ENCODE measurements at regions of chr13 and their contacts with region 1.

Region 1: DNA sequence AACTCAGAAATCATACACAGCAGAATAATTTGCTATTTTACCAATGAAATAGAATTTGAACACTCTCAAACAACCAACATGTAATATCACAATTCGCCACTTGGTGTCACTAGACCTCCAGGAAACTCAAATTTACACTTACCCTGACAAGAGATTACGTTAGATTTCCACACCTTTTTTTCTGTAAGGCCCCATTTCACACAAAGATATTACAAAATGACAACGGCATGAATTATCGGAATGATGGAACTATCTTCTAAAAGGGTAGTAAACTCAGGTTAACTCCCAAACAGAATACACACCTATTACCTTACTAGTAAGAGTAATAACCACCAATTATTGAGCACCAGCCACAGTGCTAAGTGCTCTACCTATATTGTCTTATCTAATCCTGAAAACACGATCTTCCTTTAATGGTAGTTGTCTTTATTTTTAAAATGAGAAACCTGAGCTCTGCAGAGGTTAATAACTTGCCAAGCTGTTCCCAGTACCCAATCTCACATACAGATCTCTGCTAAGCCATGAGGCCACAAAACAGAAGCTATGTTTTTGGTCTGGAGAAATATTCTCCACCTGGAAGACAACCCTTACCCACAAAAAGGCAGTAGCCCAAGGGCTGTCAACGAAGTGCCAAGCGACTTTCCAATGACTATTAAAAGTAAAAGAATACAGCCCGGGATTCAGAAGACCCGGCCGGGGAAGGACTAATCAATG is 152.4 kb downstream of the DCLK1 start:
- DNase-seq: peak; percentile 69
- H3K4me3 ChIP-seq: peak overlapping the region; percentile 19; the same call in 1 of the 2 replicates
- H3K27ac ChIP-seq: peak overlapping the region; percentile 78
- H3K4me1 ChIP-seq: peaks cover 14% of the 10 kb centered on the region
- H3K27me3 ChIP-seq: no peaks in the 10 kb centered on the region

Region 2: DNA sequence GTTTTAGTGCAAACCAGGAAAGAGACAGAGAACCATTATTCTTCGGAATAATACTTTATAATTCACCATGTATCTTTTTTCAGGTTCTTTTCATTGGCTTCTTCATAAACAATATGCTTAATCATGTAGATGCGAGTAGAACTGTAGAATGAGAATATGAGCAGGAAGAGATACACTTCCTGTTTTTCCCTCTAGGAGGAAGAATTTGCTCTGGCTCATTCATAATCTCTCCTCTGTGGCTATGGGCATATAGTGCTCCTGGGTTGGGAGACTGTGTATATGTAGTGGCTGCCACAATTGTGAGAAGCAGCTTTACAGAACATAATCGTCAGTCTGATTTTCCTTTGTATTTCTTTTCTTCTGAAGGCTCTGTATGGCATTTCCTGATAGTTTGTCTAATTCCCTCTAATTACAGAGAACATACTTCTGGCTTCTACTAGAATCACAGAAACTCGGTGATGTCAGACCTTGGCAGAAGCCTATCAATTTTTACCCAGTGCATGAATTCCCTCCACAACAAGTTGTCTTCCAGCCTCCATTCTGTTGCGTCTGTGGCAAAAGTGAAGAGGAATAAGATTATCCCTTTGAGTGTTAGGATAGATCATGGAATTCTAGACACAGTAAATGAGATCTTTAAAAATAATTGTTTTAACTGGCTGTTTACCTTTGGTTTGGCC is 155.3 kb after region 1 on chr13:
- in situ Hi-C with region 1: no loop called
- DNase-seq: no peak
- H3K4me3 ChIP-seq: no peak overlapping the region
- H3K27ac ChIP-seq: no peak overlapping the region
- H3K4me1 ChIP-seq: no peaks in the 10 kb centered on the region
- H3K27me3 ChIP-seq: peaks cover 39% of the 10 kb centered on the region

Region 3: GRCh38 chr13:36275190-36276002 is 296.6 kb after region 1 on chr13:
- in situ Hi-C with region 1: loop called (anchors 5 kb)
- DNase-seq: peak; percentile 83
- H3K4me3 ChIP-seq: no peak overlapping the region
- H3K27ac ChIP-seq: no peak overlapping the region
- H3K4me1 ChIP-seq: peaks cover 5% of the 10 kb centered on the region
- H3K27me3 ChIP-seq: no peaks in the 10 kb centered on the region

Region 4: GRCh38 chr13:36395280-36395679 is 416.5 kb after region 1 on chr13:
- in situ Hi-C with region 1: loop called (anchors 25 kb)
- DNase-seq: peak; percentile 79
- H3K4me3 ChIP-seq: no peak overlapping the region
- H3K27ac ChIP-seq: no peak overlapping the region
- H3K4me1 ChIP-seq: no peaks in the 10 kb centered on the region
- H3K27me3 ChIP-seq: peaks cover 9% of the 10 kb centered on the region; the same call in 1 of the 2 replicates

Measured in GM23248 (cell line).